Activated CD4-positive, alpha-beta memory T cell treated with anti-CD3 and anti-CD28 coated beads for 36 hours (primary cell): ENCODE measurements at regions of chr11 and their contacts with region 1.

Region 1: DNA sequence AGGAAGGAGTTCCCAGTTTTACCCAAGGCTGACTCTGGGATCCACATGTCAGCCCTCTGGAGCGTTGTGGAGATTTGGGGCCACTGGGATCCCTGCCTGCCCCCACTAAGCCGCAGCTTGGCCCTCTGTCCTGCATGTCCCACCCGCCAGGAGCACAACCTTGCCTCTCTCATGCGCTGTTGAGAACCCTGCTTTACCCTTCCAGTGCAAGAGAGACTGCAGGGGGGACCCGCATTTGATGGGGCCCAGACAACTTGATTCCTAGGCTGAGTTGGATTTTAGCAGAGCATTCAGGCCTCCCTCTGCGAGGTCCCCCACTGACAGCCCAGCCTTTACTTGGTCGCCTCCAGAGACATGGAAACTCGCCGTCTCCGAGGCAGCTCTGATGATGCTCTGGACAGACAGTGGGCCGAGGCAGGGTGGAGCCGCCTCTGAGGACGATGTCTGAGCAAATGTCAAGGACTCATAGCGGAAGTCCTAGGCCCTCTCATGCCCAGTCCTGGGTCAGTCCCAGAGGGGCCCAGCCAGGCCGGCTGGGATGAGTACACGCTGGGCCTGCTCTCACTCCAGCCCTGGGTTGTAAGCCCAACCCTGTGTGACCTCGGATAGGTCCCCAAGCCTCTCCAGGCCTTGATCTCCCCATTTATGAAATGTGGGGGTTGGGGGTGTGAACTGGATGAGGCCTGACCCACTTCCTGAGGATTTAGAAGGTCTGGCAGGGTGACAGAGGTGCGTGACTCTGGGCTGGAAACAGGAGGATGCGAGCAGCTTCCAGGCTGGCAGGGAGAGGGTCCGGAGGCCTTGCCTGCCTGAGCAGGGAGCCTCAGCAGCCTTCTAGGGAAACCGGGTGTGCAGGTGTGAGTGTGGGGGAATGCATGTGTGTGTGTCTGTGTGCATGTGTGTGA is 630 bp downstream of the CD5 start:
- DNase-seq: peak; percentile 51
- H3K4me3 Mint-ChIP-seq: no peak overlapping the region
- H3K27ac Mint-ChIP-seq: no peak overlapping the region
- H3K4me1 Mint-ChIP-seq: peaks cover 28% of the 10 kb centered on the region
- H3K27me3 Mint-ChIP-seq: no peaks in the 10 kb centered on the region

Region 2: DNA sequence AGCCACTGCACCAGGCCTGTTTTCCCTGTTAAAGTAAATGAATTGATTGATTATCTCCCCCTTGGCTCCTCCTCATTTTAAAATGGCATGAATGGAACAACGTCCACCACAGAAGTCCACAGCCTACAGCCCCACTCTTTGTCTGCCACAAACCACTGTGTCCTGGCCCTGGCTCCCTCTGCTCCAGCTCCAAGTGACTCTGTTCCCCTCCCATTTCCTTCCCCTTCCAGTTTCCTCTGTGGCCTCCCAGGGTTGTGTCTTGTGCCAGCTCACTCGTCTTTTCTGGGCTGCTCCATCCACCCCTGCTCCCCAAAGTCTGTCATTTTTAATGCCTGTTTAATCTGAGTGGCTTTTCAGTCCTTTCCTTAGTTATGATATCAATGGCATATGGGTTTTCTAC is 53.1 kb before region 1 on chr11:
- CTCF ChIA-PET with region 1: no interaction called
- POLR2A ChIA-PET with region 1: interaction called, 9 read pairs
- intact Hi-C with region 1: loop called (anchors 2 kb)
- DNase-seq: peak; percentile 7
- H3K4me3 Mint-ChIP-seq: peak overlapping the region; percentile 27
- H3K27ac Mint-ChIP-seq: peak overlapping the region; percentile 77
- H3K4me1 Mint-ChIP-seq: peaks cover 82% of the 10 kb centered on the region
- H3K27me3 Mint-ChIP-seq: no peaks in the 10 kb centered on the region

Region 3: GRCh38 chr11:61120706-61121191 is 17.8 kb after region 1 on chr11:
- CTCF ChIA-PET with region 1: no interaction called
- POLR2A ChIA-PET with region 1: interaction called, 5 read pairs
- intact Hi-C with region 1: loop called (anchors 2 kb)
- DNase-seq: no peak
- H3K4me3 Mint-ChIP-seq: no peak overlapping the region
- H3K27ac Mint-ChIP-seq: peak overlapping the region; percentile 85
- H3K4me1 Mint-ChIP-seq: peaks cover 59% of the 10 kb centered on the region
- H3K27me3 Mint-ChIP-seq: no peaks in the 10 kb centered on the region

Region 4: DNA sequence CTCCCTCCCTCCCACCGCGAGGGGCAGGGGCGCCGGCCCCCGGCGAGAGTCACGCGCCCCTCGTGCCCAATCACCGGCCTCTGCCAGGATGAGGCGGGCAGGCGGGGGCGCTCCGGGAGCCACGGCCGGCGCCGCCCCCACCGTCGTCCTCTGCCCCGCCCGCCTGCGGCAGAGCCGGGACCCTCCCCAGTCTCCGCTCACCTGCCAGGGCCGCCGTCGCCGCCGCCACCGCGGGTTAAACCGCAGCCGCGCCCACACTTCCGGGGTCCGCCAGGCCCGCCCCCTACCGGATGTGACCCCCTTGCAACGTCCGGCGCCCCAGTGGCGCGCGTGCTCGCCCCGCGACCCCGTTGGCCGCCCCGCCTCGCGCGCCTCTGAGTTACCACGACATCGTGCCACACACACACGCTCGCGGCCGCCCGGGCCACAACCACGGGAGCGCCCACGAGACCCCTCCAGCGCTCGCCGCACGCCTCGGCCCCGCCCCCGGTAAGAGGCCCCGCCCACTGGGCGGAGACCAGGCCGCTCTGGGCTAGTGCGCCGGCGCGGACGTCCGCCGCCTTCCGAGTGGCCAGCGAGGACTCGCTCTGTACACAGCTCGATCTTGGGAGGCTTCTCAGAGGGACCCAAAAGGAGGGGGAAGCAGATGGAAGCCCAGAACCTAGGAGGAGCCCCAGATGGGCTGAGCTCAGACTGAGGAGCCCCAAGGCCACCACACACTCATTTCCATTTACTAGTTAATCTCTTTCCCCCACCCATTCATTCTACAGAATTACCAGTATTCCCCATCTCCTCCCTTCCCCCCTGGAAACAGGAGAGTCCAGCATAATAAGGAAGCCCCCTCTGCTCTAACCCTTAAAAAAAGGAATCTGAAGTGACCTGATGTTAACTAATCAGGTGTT is 58.5 kb after region 1 on chr11 and contains the start of gene VPS37C:
- CTCF ChIA-PET with region 1: no interaction called
- POLR2A ChIA-PET with region 1: no interaction called
- intact Hi-C with region 1: no loop called
- DNase-seq: peak; percentile 94
- H3K4me3 Mint-ChIP-seq: peak within 1 kb of the TSS; percentile 85
- H3K27ac Mint-ChIP-seq: peak within 1 kb of the TSS; percentile 94
- H3K4me1 Mint-ChIP-seq: peaks cover 53% of the 10 kb centered on the region
- H3K27me3 Mint-ChIP-seq: peaks cover 2% of the 10 kb centered on the region
- total RNA-seq, gene VPS37C: 9.0 TPM